Posterior cingulate gyrus (tissue), 11 donors: ENCODE measurements at regions of chr1 and their contacts with region 1.

Region 1: GRCh38 chr1:40783001-40783905 is at the start of gene KCNQ4:
- DNase-seq: peak in 7 of 10 donors; percentile 27 to 90 (median 49)

Region 2: GRCh38 chr1:40612345-40612831 is 170.9 kb before region 1 on chr1:
- intact Hi-C with region 1: loop called (anchors 10 kb)
- DNase-seq: peak in 8 of 10 donors; percentile 35 to 92 (median 72)

Region 3: GRCh38 chr1:40901886-40902852 is 118.9 kb after region 1 on chr1:
- intact Hi-C with region 1: no loop called
- DNase-seq: peak in 2 of 10 donors; percentile 16 to 29

Region 4: GRCh38 chr1:40951943-40952743 is 168.9 kb after region 1 on chr1:
- intact Hi-C with region 1: loop called (anchors 10 kb)
- DNase-seq: peak; percentile 60 to 97 (median 76)